ENCODE measurements at regions of chr5 and their contacts with region 1.

Region 1: DNA sequence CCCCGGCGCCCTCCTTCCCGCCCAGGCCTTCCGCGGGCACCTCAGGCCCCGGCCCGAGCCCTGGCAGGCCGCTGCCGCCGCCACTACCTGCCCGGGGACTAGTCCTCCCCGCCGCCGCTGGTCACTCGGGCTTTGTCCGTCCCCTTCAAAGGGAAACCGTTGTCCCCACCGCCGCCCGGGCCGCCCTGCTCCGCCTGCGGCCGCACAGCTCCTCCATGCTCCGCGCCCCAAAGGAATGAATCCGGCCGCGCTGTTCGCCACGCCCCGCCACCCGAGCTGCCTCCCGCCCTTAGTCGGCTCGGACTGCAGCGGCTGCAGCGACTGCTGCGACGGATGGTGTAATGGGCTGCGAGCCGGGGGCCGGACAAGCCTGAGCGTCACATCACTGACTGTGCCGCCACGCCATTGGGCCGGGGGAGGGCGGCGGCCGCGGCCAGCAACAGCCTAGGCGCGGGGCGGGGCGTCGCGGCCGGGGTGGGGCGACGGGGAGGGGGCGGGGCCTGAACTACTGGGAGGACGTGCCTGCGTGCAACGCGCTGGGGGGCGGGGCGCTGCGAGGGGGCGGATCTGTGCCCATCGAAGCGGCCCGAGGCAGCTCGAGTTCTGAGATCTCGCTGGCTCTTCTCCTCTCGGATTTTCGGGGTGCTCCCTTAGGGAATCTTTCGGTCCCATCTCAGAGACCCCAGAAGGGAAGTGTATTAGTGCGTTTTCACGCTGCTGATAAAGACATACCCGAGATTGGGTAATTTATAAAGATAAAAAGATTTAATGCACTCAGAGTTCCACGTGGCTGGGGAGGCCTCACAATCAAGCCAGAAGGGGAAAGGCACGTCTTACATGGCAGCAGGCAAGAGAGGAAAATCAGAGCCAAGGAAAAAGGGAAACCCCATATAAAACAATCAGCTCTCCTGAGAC is at the start of gene FEM1C:
- DNase-seq: peak; percentile 83
- ATAC-seq: peak; percentile 94
- H3K4me3 ChIP-seq: peak within 1 kb of the TSS; percentile 81
- H3K27ac ChIP-seq: peak within 1 kb of the TSS; percentile 88
- H3K4me1 ChIP-seq: peaks cover 4% of the 10 kb centered on the region
- H3K27me3 ChIP-seq: no peaks in the 10 kb centered on the region
- CTCF ChIP-seq: no peak
- EP300 ChIP-seq: no peak
- POLR2A ChIP-seq: peak; percentile 100
- RAD21 ChIP-seq: no peak
- polyA plus RNA-seq, gene FEM1C: 1.9 to 7.1 TPM

Region 2: DNA sequence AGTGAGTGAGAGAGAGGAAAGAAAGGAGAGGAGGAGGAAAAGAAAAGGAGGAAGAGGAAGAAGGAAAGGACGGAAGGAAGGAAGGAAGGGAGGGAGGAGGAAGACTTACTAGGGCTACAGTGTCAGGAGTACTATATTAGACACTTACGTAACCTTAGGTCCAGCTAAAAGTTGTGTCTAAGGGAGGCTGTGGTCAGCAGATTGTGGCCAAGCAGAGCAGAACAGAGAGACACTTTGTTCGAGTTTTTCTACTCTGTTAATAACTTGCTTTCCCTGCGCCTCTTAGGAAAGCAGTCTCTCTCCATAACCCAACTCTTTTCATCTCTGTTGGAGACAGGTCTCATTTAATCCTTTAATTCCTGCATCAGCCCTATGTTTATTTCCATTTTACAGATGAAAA is 1043.9 kb before region 1 on chr5:
- CTCF ChIA-PET with region 1: no interaction called
- POLR2A ChIA-PET with region 1: no interaction called
- RAD21 ChIA-PET with region 1: no interaction called
- SMC1A ChIA-PET with region 1: no interaction called
- in situ Hi-C with region 1: no loop called
- intact Hi-C with region 1: no loop called
- DNase-seq: no peak
- ATAC-seq: no peak
- H3K4me3 ChIP-seq: no peak overlapping the region
- H3K27ac ChIP-seq: no peak overlapping the region
- H3K4me1 ChIP-seq: no peaks in the 10 kb centered on the region
- H3K27me3 ChIP-seq: no peaks in the 10 kb centered on the region
- CTCF ChIP-seq: no peak
- EP300 ChIP-seq: no peak
- POLR2A ChIP-seq: no peak
- RAD21 ChIP-seq: no peak

Region 3: DNA sequence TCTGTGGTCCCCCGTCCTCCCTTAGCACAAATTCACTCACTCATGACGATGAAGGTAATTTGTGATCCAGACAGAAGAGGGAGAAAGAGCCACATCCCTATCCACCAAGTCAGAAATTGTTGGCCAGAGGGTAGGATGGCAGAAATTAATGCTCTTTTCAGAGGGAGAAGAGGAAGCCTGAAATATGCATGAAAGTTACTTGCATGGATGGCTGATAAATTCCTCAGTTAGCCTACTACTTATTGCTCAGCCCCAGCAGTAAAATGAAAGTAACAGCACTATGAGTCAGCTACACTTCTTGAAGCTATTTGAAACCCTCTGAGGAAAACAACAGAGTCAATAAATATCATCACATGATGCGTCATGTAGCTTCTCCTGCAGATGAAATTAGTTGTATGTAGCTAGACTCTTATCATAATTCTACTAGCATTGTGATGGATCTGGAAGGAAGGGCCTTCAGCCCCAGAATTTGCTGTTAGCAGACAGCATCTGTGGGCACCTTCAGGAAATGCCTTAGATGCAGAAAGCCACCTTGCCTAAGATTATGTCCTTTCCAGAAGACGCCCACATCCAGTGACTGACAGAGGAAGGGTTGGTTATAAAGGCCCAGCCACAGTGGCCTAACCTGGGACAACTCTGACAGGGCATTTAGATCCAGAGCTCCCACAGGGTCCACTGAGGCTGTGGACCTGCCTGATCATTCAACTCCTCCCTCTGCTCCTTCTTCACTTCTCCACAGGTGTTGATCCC is 167.1 kb before region 1 on chr5:
- CTCF ChIA-PET with region 1: interaction called, 11 read pairs
- POLR2A ChIA-PET with region 1: interaction called, 11 read pairs
- RAD21 ChIA-PET with region 1: interaction called, 43 read pairs
- SMC1A ChIA-PET with region 1: interaction called, 94 read pairs
- in situ Hi-C with region 1: no loop called
- intact Hi-C with region 1: loop called (anchors 5 kb)
- DNase-seq: peak; percentile 4
- ATAC-seq: peak; percentile 54
- H3K4me3 ChIP-seq: no peak overlapping the region
- H3K27ac ChIP-seq: no peak overlapping the region
- H3K4me1 ChIP-seq: peaks cover 9% of the 10 kb centered on the region
- H3K27me3 ChIP-seq: no peaks in the 10 kb centered on the region
- CTCF ChIP-seq: no peak
- EP300 ChIP-seq: no peak
- POLR2A ChIP-seq: no peak
- RAD21 ChIP-seq: peak; percentile 40

Region 4: GRCh38 chr5:115530426-115530825 is 14.3 kb before region 1 on chr5:
- CTCF ChIA-PET with region 1: interaction called, 5 read pairs
- POLR2A ChIA-PET with region 1: interaction called, 9 read pairs
- RAD21 ChIA-PET with region 1: interaction called, 18 read pairs
- SMC1A ChIA-PET with region 1: interaction called, 166 read pairs
- in situ Hi-C with region 1: no loop called
- intact Hi-C with region 1: no loop called
- DNase-seq: no peak
- ATAC-seq: no peak
- H3K4me3 ChIP-seq: no peak overlapping the region
- H3K27ac ChIP-seq: no peak overlapping the region
- H3K4me1 ChIP-seq: no peaks in the 10 kb centered on the region
- H3K27me3 ChIP-seq: no peaks in the 10 kb centered on the region
- CTCF ChIP-seq: no peak
- EP300 ChIP-seq: no peak
- POLR2A ChIP-seq: no peak
- RAD21 ChIP-seq: no peak

Region 5: DNA sequence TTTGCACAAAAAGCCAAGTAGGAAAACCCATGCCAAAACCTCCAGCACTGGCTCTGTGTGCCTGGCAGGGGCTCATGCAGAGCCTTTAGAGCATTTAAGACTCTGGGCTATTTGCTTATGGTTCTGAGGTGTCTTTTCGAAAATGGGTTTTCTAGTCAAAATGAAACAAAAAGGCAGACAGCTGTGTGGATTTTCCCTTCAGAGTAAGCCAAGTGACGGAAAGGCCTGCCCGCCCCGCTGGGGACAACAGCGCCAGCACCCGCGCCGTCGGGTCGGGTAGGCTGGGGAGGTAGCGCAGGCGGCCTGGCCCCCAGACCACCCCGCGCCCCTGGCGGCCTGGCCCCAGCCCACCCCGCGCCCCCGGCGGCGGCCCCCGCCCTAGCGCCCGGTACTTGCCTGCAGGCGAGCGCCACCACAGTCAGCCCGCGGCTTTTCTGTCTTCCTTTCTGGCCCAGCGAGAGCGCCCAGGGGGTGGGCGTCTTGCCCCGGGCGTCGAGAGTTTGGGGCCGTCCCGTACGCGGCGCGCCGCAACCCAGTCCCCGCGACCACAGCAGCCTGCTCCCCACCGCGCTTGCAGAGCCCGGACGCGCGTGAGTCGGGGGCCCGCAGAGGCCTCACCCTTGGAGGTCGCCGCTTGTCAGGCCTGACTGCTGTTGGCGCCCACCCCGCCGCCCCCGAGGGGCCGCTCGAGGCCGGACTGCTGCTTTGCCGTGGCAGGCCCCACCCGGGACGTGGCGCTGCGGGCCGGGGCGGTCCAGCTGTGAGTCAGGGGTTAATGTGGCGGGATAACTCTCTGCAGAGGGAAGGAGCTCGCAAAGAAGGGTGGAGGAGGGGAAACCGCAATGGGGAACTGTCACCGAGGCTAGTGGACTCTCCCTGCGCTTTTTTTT is 57.3 kb after region 1 on chr5 and contains the start of gene TICAM2:
- CTCF ChIA-PET with region 1: no interaction called
- POLR2A ChIA-PET with region 1: interaction called, 10 read pairs
- RAD21 ChIA-PET with region 1: interaction called, 6 read pairs
- SMC1A ChIA-PET with region 1: interaction called, 7 read pairs
- in situ Hi-C with region 1: no loop called
- intact Hi-C with region 1: no loop called
- DNase-seq: peak; percentile 77
- ATAC-seq: peak; percentile 87
- H3K4me3 ChIP-seq: peak within 1 kb of the TSS; percentile 85
- H3K27ac ChIP-seq: peak within 1 kb of the TSS; percentile 94
- H3K4me1 ChIP-seq: peaks cover 22% of the 10 kb centered on the region
- H3K27me3 ChIP-seq: no peaks in the 10 kb centered on the region
- CTCF ChIP-seq: peak in 2 of 3 experiments; percentile 4 to 21; a peak in 1 of 6 replicates
- EP300 ChIP-seq: peak; percentile 66 to 76
- POLR2A ChIP-seq: peak; percentile 88
- RAD21 ChIP-seq: no peak
- polyA plus RNA-seq, gene TICAM2: 1.8 to 2.3 TPM

Region 6: DNA sequence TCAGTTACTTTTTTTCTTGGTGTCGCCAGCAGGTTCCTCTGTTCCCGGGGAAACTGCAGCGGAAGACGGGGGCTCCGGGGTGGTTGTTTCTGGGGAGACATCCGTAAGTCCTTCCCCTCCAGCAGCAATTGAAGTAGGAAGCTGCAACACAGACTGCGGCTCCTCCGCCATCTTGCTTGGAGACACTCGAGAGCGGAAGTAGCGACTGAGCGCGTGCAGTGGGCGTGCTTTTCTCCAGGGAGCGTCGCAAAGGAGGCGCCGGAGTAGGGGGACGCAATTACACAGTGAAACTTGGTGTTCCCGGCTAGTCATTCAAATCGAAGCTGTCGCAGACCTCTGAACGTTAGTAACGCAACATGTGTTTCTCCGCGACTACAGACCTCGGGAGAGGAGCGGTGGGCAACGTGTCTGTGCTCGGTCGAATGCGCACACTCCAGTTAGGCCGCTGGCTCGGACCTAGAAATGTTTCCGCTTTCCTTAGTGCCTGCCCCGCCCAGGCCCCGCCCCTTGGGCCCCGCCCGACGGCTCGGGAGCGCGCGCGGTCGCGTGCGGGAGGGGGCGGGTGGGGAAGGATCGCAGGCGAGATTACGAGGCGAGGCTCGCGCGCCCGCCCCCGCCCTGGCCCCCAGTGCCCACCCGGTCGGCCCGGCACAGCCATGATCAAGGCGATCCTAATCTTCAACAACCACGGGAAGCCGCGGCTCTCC is 296.8 kb after region 1 on chr5 and contains the starts of genes AP3S1 and ATG12:
- CTCF ChIA-PET with region 1: interaction called, 4 read pairs
- POLR2A ChIA-PET with region 1: no interaction called
- RAD21 ChIA-PET with region 1: interaction called, 4 read pairs
- SMC1A ChIA-PET with region 1: interaction called, 4 read pairs
- in situ Hi-C with region 1: no loop called
- intact Hi-C with region 1: loop called (anchors 2 kb)
- DNase-seq: peak; percentile 88
- ATAC-seq: peak; percentile 84
- H3K4me3 ChIP-seq: peak within 1 kb of the TSS; percentile 83
- H3K27ac ChIP-seq: peak within 1 kb of the TSS; percentile 91
- H3K4me1 ChIP-seq: peaks cover 19% of the 10 kb centered on the region
- H3K27me3 ChIP-seq: no peaks in the 10 kb centered on the region
- CTCF ChIP-seq: no peak
- EP300 ChIP-seq: no peak
- POLR2A ChIP-seq: peak; percentile 93
- RAD21 ChIP-seq: no peak
- polyA plus RNA-seq, gene AP3S1: 36.4 to 48.5 TPM
- polyA plus RNA-seq, gene ATG12: 67.4 to 92.0 TPM

Measured in GM12878 (cell line).